ENCODE measurements at regions of chr4 and their contacts with region 1.

Region 1: GRCh38 chr4:177047070-177047850 is 254.5 kb upstream of the VEGFC start:
- DNase-seq: peak; percentile 59
- ATAC-seq: peak; percentile 93
- H3K4me3 ChIP-seq: no peak overlapping the region
- H3K27ac ChIP-seq: no peak overlapping the region
- H3K4me1 ChIP-seq: 0 out of 4 replicates have a peak, but pooled peaks cover 0 to 4% of the 10 kb centered on the region in 2 experiments
- H3K27me3 ChIP-seq: no peaks in the 10 kb centered on the region
- CTCF ChIP-seq: peak; percentile 79 to 85 (median 82)
- POLR2A ChIP-seq: no peak
- RAD21 ChIP-seq: peak; percentile 80

Region 2: DNA sequence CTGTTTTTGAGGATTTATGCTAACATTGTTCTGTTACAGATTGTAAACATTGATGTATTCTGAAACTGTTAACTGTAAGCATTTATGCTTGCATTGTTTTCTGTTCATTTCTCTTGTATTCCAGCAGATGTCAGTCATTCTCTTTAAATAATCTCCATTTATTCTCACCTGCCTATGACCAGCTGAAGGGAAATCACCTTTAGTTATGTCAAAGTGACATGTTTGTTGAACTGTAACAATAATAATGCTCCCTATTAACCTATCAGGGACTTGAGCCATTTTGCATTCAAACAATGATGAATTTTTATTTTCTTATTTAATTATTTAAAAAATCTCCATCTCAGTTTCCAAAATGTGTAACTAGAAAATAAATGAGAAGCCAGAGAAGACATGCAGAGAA is 669.5 kb before region 1 on chr4:
- CTCF ChIA-PET with region 1: interaction called, 36 read pairs
- POLR2A ChIA-PET with region 1: no interaction called
- RAD21 ChIA-PET with region 1: interaction called, 15 to 19 read pairs
- intact Hi-C with region 1: loop called (anchors 1 kb)
- DNase-seq: peak; percentile 27
- ATAC-seq: peak; percentile 69
- H3K4me3 ChIP-seq: no peak overlapping the region
- H3K27ac ChIP-seq: no peak overlapping the region
- H3K4me1 ChIP-seq: no peaks in the 10 kb centered on the region
- H3K27me3 ChIP-seq: no peaks in the 10 kb centered on the region
- CTCF ChIP-seq: peak; percentile 28 to 69 (median 47); a peak in 4 of 6 replicates
- POLR2A ChIP-seq: no peak
- RAD21 ChIP-seq: peak; percentile 78

Region 3: GRCh38 chr4:176789955-176790354 is 257.3 kb before region 1 on chr4:
- CTCF ChIA-PET with region 1: interaction called, 6 read pairs
- POLR2A ChIA-PET with region 1: no interaction called
- RAD21 ChIA-PET with region 1: no interaction called
- intact Hi-C with region 1: loop called (anchors 2 kb)
- DNase-seq: peak; percentile 23
- ATAC-seq: peak; percentile 78
- H3K4me3 ChIP-seq: no peak overlapping the region
- H3K27ac ChIP-seq: no peak overlapping the region
- H3K4me1 ChIP-seq: no peaks in the 10 kb centered on the region
- H3K27me3 ChIP-seq: no peaks in the 10 kb centered on the region
- CTCF ChIP-seq: peak; percentile 43 to 72 (median 61); a peak in 5 of 6 replicates
- POLR2A ChIP-seq: no peak
- RAD21 ChIP-seq: peak; percentile 61

Region 4: DNA sequence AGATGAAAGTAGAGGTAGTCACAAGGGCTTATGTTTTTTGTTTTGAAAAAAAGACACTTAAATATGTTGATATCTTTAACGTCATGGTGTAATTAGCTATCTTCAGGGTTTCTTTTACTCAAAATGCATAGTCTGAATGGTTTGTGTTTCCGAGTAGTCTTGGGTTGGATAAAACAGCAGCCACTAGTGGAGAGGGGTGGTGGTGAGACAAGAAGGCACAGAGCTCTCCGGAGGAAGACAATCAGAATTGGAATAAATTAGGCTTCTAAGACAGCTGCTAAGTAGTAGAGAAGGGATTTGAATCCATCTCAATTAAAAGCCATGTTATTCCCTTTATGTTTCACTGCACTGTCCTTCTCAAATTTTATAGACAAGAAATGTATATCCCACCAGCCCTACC is 14.1 kb before region 1 on chr4:
- CTCF ChIA-PET with region 1: interaction called, 17 read pairs
- POLR2A ChIA-PET with region 1: no interaction called
- RAD21 ChIA-PET with region 1: no interaction called
- intact Hi-C with region 1: no loop called
- DNase-seq: no peak
- ATAC-seq: no peak
- H3K4me3 ChIP-seq: no peak overlapping the region
- H3K27ac ChIP-seq: no peak overlapping the region
- H3K4me1 ChIP-seq: no peaks in the 10 kb centered on the region
- H3K27me3 ChIP-seq: no peaks in the 10 kb centered on the region
- CTCF ChIP-seq: peak in 1 of 3 experiments; percentile 25; a peak in 2 of 6 replicates
- POLR2A ChIP-seq: no peak
- RAD21 ChIP-seq: no peak

Region 5: DNA sequence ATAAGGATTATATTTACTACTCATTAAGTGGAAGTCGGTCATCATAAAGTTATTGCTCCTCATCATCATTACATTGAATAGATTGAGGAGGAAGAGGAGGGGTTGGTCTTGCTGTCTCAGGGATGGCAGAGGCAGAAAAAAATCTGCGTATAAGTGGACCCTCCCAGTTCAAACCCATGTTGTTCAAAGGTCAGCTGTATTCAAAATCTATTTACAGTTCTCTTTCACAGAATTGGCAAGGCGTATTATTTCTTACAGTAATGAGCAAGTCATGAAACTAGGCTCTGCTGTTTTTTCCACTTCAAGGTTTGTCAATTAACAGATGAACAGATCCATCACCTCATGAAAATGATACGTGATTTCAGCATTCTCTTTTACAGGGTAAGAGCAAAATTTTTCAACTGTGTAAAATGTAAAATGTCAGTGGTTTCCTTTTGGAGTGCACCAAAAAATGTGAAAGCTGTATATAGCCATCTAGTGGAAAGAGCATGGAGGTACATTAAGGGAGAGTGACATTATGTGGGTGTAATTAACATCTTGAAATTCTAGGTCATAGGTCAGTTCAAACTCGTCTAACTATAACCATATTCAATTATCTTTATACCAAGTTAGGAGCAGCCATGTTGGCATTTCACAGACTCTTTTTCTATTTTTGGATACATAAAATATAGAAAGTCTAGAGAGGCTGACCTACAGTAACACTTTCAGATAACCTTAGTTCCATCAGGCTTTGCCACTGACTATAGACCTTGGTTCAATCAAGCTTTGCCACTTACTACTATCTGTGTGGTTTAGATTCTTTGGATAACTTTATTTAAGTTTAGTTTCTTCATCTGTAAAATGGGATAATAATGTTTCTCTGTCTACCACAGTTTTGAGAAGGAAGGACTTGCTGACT is 292.5 kb after region 1 on chr4:
- CTCF ChIA-PET with region 1: interaction called, 8 read pairs
- POLR2A ChIA-PET with region 1: no interaction called
- RAD21 ChIA-PET with region 1: no interaction called
- intact Hi-C with region 1: loop called (anchors 10 kb)
- DNase-seq: peak; percentile 4
- ATAC-seq: peak; percentile 78
- H3K4me3 ChIP-seq: no peak overlapping the region
- H3K27ac ChIP-seq: no peak overlapping the region
- H3K4me1 ChIP-seq: no peaks in the 10 kb centered on the region
- H3K27me3 ChIP-seq: no peaks in the 10 kb centered on the region
- CTCF ChIP-seq: peak; percentile 51 to 62 (median 52); a peak in 5 of 6 replicates
- POLR2A ChIP-seq: no peak
- RAD21 ChIP-seq: peak; percentile 60

Region 6: GRCh38 chr4:177484613-177485021 is 437.4 kb after region 1 on chr4:
- CTCF ChIA-PET with region 1: no interaction called
- POLR2A ChIA-PET with region 1: no interaction called
- RAD21 ChIA-PET with region 1: no interaction called
- intact Hi-C with region 1: no loop called
- DNase-seq: peak; percentile 23
- ATAC-seq: peak; percentile 55; the same call in 1 of the 2 replicates
- H3K4me3 ChIP-seq: no peak overlapping the region
- H3K27ac ChIP-seq: no peak overlapping the region
- H3K4me1 ChIP-seq: peaks cover 0 to 9% of the 10 kb centered on the region in 2 experiments; a peak in 1 of 4 replicates
- H3K27me3 ChIP-seq: no peaks in the 10 kb centered on the region
- CTCF ChIP-seq: no peak
- POLR2A ChIP-seq: no peak
- RAD21 ChIP-seq: no peak

Measured in HCT116 (cell line).